BJ (cell line): ENCODE measurements at regions of chr6 and their contacts with region 1.

Region 1: DNA sequence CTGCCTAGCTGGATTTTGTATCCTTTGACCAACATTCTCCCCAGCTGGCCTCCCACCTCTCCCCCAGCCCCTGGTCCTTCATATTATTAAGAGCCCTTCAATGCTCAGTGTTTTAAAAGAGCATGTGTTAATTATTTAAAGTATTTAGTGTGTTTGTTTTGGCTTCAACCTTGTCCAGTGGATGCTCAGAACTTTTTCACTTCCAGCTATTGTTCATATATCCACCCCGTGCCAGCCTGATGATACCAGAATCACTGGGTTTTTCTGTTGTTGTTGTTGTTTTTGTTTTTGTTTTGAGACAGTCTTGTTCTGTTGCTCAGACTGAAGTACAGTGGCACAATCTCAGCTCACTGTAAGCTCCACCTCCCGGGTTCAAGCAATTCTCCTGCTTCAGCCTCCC is 30.4 kb upstream of the SNX9 start:
- DNase-seq: no peak
- H3K4me3 ChIP-seq: no peak overlapping the region
- H3K27me3 ChIP-seq: no peaks in the 10 kb centered on the region
- CTCF ChIP-seq: no peak

Region 2: DNA sequence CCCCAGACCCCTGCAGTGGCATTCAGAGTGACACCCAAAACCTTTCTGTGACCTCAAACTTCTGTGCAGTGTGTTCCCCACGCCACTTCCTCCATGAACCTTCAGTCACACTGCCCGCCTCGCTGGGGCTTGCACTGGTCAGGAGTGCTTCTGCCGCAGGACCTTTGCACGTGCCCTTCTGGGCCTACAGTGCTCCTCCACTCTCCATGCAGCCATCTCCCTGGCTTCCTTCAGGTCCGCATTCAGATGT is 216.1 kb after region 1 on chr6:
- CTCF ChIA-PET with region 1: no interaction called
- POLR2A ChIA-PET with region 1: interaction called, 20 read pairs
- DNase-seq: no peak
- H3K4me3 ChIP-seq: no peak overlapping the region
- H3K27me3 ChIP-seq: no peaks in the 10 kb centered on the region
- CTCF ChIP-seq: no peak